Activated T-helper 1 cell treated with anti-CD3 and anti-CD28 coated beads, Interleukin-12 subunit alpha, Interleukin-12 subunit beta, Interleukin-2, Interleukin-4 antibody, amounts not matched to agents 30 ng/mL and 10 ng/mL and 1 ng/mL, durations not matched to agents 14 hours and 24 hours and 36 hours (primary cell): ENCODE measurements at regions of chr20 and their contacts with region 1.

Region 1: GRCh38 chr20:8389381-8390036 is 257.4 kb downstream of the PLCB1 start:
- DNase-seq: no peak
- H3K4me3 Mint-ChIP-seq: no peak overlapping the region
- H3K27ac Mint-ChIP-seq: no peak overlapping the region
- H3K4me1 Mint-ChIP-seq: peaks cover 7% of the 10 kb centered on the region
- H3K27me3 Mint-ChIP-seq: peaks cover under 1% of the 10 kb centered on the region

Region 2: DNA sequence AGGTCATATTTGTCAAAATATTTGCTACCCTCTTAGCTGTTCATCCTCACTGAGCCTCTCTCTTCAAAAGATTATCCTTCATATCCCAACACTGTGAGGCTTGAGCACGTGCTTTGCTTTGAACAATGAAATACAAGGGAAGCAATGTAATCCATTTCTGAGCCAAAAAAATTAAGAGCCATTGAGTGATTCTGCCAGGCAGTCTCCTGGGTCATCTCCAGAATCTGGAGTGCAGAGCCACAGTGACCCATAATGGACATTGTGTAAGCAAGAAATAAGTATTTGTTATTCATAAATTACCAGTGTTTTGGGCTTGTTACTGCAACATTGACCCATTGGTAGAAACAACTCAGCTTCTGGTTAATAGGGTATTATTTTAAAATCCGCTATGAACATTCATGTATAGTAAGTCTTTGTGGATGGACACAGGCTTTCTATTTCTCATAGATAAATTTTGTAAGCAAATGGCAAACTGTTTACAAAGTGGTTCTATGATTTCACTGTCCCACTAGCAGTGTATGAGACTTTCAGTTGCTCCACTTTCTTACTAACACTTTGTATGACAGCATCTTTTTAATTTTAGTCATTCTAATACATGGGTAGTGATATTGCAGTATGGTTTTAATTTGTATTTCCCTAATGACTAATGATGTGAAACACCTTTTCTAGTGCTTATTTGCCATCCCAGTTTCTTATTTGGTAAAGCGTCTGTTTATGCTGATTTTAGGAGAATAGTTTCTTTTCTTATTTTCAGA is 100.7 kb after region 1 on chr20:
- intact Hi-C with region 1: no loop called
- DNase-seq: no peak
- H3K4me3 Mint-ChIP-seq: no peak overlapping the region
- H3K27ac Mint-ChIP-seq: no peak overlapping the region
- H3K4me1 Mint-ChIP-seq: no peaks in the 10 kb centered on the region
- H3K27me3 Mint-ChIP-seq: no peaks in the 10 kb centered on the region

Region 3: DNA sequence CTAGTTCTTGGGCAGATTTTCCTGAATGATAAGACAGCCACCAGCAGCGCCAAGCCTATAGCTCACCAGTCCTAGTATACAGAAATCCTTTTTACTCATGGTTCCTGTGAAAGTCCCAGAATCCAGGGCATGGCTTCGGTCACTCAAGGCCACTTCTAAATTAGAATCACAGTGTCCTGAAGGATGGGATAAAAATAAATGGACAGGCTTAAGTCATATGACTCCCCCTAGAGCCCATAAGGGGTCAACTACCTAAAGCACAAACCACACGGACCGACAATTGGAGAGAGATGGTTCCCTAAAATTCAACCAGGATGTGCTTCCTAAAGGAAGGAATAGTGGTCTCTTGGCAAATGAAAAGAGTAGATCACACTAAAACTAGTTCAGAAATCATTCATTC is 275.3 kb after region 1 on chr20:
- intact Hi-C with region 1: loop called (anchors 10 kb)
- DNase-seq: no peak
- H3K4me3 Mint-ChIP-seq: no peak overlapping the region
- H3K27ac Mint-ChIP-seq: no peak overlapping the region
- H3K4me1 Mint-ChIP-seq: no peaks in the 10 kb centered on the region
- H3K27me3 Mint-ChIP-seq: no peaks in the 10 kb centered on the region

Region 4: DNA sequence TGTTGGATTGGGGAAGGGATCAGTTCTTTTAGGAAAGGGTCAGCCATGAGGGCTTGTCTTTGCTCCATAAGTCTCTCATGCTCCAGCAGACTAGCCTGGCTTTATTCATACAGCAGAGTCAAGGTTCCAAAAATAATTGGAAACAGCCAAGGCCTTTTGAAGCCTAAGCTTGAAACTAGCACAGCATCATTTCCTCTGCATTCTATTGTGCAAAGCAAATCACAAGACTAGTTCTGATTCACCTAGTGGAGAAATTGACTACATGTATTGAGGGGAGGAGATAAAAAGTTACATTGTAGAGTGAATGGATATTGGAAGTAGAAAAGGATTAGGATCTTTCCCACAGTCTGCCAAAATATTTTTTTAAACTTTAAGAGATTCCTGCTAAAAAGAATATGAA is 520.1 kb after region 1 on chr20:
- intact Hi-C with region 1: no loop called
- DNase-seq: no peak
- H3K4me3 Mint-ChIP-seq: no peak overlapping the region
- H3K27ac Mint-ChIP-seq: no peak overlapping the region
- H3K4me1 Mint-ChIP-seq: no peaks in the 10 kb centered on the region
- H3K27me3 Mint-ChIP-seq: no peaks in the 10 kb centered on the region